Esophagus squamous epithelium (tissue), 5 donors: ENCODE measurements at regions of chr5 and their contacts with region 1.

Region 1: GRCh38 chr5:63963080-63963735 is 963 bp upstream of the HTR1A start:
- DNase-seq: no peak
- H3K4me3 ChIP-seq: no peak overlapping the region
- H3K27ac ChIP-seq: no peak overlapping the region
- H3K4me1 ChIP-seq: no peaks in the 10 kb centered on the region
- H3K27me3 ChIP-seq: peaks cover 0 to 45% (median 9%) of the 10 kb centered on the region in 4 donors
- CTCF ChIP-seq: peak in 4 of 6 experiments; percentile 9 to 45 (median 19)
- POLR2A ChIP-seq: no peak

Region 2: GRCh38 chr5:63401436-63402046 is 561.7 kb before region 1 on chr5:
- intact Hi-C with region 1: loop called (anchors 10 kb)
- DNase-seq: no peak
- H3K4me3 ChIP-seq: no peak overlapping the region
- H3K27ac ChIP-seq: no peak overlapping the region
- H3K4me1 ChIP-seq: no peaks in the 10 kb centered on the region
- H3K27me3 ChIP-seq: no peaks in the 10 kb centered on the region
- CTCF ChIP-seq: peak in 5 of 6 experiments; percentile 22 to 62 (median 48)
- POLR2A ChIP-seq: no peak